T-cell (primary cell): ENCODE measurements at regions of chr2 and their contacts with region 1.

Region 1: DNA sequence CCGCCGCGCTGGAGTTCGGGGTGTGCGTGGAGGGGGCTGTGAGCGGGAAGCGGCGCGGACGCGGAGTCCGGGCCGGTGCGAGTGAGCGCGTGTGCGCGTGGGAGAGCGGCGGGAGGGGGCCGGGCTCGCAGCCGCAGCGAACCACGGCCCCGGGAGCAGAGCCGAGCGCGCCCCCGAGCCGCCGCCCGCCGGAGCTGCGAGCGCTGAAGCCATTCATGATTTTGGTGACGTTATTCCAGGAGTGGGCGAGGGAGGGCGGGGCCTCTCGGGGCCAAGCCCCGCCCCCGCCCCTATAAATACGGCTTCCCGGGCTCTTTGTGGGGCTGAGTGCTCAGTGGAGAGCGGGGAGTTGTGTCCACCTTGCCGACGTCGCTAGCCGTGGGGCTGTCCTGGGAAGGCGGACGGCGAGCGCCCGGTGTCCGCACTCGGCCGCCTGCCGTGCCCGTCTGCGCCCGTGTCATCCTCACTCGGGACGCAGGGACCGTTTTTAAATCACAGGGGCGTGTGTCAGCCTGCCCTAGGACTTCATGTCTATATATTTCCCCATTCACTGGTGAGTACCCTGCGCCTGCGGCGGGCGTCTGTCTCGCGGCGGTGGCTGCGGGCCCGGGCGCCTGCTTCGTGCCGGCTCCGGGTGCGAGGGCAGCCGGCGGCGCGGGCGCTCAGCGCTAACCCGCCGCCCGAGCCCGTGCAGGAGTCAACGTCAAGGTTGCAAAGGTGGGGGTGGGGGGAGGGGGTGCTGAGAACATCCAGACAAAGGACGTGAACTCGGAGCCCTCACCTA is at the start of gene LBH:
- DNase-seq: peak; percentile 80 to 95 (median 88)
- ATAC-seq: peak; percentile 58 to 69 (median 63)
- H3K4me3 ChIP-seq: peak within 1 kb of the TSS; percentile 89 to 92
- H3K4me3 Mint-ChIP-seq: peak within 1 kb of the TSS; percentile 89 to 98 (median 92)
- H3K27ac ChIP-seq: peak within 1 kb of the TSS; percentile 90
- H3K27ac Mint-ChIP-seq: peak within 1 kb of the TSS; percentile 88 to 96
- H3K4me1 ChIP-seq: peaks cover 23 to 59% of the 10 kb centered on the region in 2 experiments
- H3K4me1 Mint-ChIP-seq: peaks cover 48 to 64% (median 63%) of the 10 kb centered on the region in 3 donors
- H3K27me3 ChIP-seq: no peaks in the 10 kb centered on the region
- H3K27me3 Mint-ChIP-seq: no peaks in the 10 kb centered on the region
- total RNA-seq, gene LBH: 209 to 386 (median 323) TPM

Region 2: DNA sequence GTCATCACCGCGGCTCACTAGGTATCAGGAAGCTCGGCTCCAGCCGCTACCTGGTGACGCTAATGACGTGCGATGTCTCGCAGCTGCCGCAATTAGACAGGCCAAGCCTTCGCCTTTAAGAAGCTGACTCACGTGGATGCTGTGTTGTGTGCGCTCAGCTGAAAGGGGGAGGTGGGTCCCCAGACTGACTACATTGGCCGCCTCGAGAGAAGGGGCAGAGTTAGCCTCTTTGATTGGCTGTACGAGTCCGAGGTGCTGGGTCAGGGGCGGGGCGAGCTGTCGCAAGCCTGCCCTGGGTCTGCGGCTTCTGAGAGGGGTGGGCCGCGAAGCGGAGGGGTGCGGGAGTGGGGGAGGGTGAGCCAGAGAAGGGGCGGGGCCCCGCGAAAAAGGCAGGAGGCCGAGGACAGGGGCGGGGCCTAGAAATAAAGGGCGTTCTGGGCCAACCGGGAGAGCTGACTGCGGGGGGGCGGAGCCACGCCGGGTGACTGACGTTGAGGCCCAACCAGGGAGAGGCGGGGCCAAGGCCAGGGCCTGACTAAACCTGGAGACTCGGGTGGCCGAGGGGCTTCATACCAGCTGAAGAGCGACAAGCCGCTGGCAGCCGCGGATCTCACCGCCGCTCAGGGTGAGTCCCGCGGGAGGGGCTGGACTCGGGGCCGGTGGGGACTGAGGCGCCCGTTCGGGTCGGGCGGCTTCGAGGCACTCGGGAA is 84.8 kb before region 1 on chr2 and contains the start of gene YPEL5:
- CTCF ChIA-PET with region 1: interaction called in 1 of 2 experiments, 3 read pairs
- POLR2A ChIA-PET with region 1: interaction called, 10 to 59 read pairs
- DNase-seq: peak; percentile 97 to 100 (median 100)
- ATAC-seq: peak; percentile 85 to 90 (median 88)
- H3K4me3 ChIP-seq: peak within 1 kb of the TSS; percentile 67 to 77
- H3K4me3 Mint-ChIP-seq: peak within 1 kb of the TSS; percentile 83 to 94 (median 84)
- H3K27ac ChIP-seq: peak within 1 kb of the TSS; percentile 99
- H3K27ac Mint-ChIP-seq: peak within 1 kb of the TSS; percentile 99 to 100
- H3K4me1 ChIP-seq: peaks cover 22 to 36% of the 10 kb centered on the region in 2 experiments
- H3K4me1 Mint-ChIP-seq: peaks cover 56 to 61% (median 58%) of the 10 kb centered on the region in 3 donors
- H3K27me3 ChIP-seq: no peaks in the 10 kb centered on the region
- H3K27me3 Mint-ChIP-seq: no peaks in the 10 kb centered on the region
- total RNA-seq, gene YPEL5: 73.0 to 962 (median 77.3) TPM

Region 3: GRCh38 chr2:30188292-30188691 is 43.1 kb before region 1 on chr2:
- CTCF ChIA-PET with region 1: no interaction called
- POLR2A ChIA-PET with region 1: no interaction called
- DNase-seq: no peak
- ATAC-seq: no peak
- H3K4me3 ChIP-seq: no peak overlapping the region
- H3K4me3 Mint-ChIP-seq: no peak overlapping the region
- H3K27ac ChIP-seq: no peak overlapping the region
- H3K27ac Mint-ChIP-seq: no peak overlapping the region
- H3K4me1 ChIP-seq: no peaks in the 10 kb centered on the region
- H3K4me1 Mint-ChIP-seq: peaks cover 0 to 4% (median 2%) of the 10 kb centered on the region in 3 donors
- H3K27me3 ChIP-seq: peaks cover 0 to 1% of the 10 kb centered on the region in 2 experiments
- H3K27me3 Mint-ChIP-seq: peaks cover 0 to 2% of the 10 kb centered on the region in 2 donors

Region 4: DNA sequence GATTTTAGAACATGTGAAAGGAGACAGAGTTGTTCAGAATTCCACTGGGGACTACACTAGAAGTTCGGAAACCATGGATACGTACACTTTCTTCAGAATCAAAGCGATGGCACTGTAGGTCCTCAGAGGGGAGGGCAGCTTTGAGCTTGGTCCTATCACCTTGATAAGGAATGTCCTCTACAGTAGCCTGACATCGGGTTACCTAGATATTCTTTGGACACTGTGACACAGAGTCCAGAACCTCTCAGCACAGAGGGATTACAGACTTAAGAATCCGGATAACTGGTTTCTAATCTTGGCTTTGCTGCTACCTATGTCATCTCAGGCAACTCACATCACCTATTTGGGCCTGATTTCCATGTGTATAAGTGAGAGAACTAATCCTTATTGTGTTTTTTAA is 14.0 kb after region 1 on chr2:
- CTCF ChIA-PET with region 1: interaction called, 4 to 6 read pairs
- POLR2A ChIA-PET with region 1: interaction called, 10 to 16 read pairs
- DNase-seq: no peak
- ATAC-seq: no peak
- H3K4me3 ChIP-seq: no peak overlapping the region
- H3K4me3 Mint-ChIP-seq: peak overlapping the region in 2 of 3 donors; percentile 34 to 67
- H3K27ac ChIP-seq: no peak overlapping the region
- H3K27ac Mint-ChIP-seq: peak overlapping the region; percentile 82 to 87
- H3K4me1 ChIP-seq: peaks cover 47 to 80% of the 10 kb centered on the region in 2 experiments
- H3K4me1 Mint-ChIP-seq: peaks cover 88 to 91% (median 89%) of the 10 kb centered on the region in 3 donors
- H3K27me3 ChIP-seq: no peaks in the 10 kb centered on the region
- H3K27me3 Mint-ChIP-seq: no peaks in the 10 kb centered on the region

Region 5: DNA sequence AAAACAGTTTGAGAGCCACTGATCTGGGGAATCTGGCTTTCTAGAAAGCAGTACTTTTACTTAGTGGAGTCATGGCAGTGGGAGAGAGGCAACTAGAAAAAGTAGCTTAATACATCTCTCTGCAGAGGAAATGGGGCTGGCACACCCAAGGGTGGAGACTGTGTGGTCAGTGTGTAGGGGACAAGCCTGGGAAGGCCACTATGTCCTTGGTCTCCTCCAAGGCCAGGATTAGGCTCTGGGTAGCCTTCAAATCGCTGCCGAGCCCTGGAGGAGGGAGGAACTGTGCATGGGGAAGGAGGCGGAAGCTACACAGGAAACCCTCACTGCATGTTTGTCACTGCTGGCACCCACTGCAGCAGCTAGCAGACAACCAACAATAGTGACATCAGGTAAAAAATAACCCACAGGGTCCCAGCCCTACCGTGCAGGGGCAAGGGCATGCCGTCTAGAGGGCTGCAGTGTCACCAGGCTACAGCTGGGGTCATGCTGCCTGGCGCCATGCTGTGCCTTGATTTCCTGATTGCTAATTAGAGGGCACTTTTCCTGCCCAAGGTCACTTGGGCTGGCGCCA is 34.7 kb after region 1 on chr2:
- CTCF ChIA-PET with region 1: interaction called, 3 to 4 read pairs
- POLR2A ChIA-PET with region 1: interaction called, 5 to 11 read pairs
- DNase-seq: peak; percentile 59 to 83 (median 71)
- ATAC-seq: peak; percentile 94 to 96 (median 96)
- H3K4me3 ChIP-seq: peak overlapping the region; percentile 34 to 50
- H3K4me3 Mint-ChIP-seq: peak overlapping the region; percentile 73 to 80 (median 79)
- H3K27ac ChIP-seq: peak overlapping the region; percentile 89
- H3K27ac Mint-ChIP-seq: peak overlapping the region; percentile 99
- H3K4me1 ChIP-seq: peaks cover 45 to 58% of the 10 kb centered on the region in 2 experiments
- H3K4me1 Mint-ChIP-seq: peaks cover 80 to 91% (median 84%) of the 10 kb centered on the region in 3 donors
- H3K27me3 ChIP-seq: no peaks in the 10 kb centered on the region
- H3K27me3 Mint-ChIP-seq: no peaks in the 10 kb centered on the region

Region 6: GRCh38 chr2:30341507-30342267 is 110.3 kb after region 1 on chr2:
- CTCF ChIA-PET with region 1: no interaction called
- POLR2A ChIA-PET with region 1: no interaction called
- DNase-seq: no peak
- ATAC-seq: no peak
- H3K4me3 ChIP-seq: no peak overlapping the region
- H3K4me3 Mint-ChIP-seq: no peak overlapping the region
- H3K27ac ChIP-seq: no peak overlapping the region
- H3K27ac Mint-ChIP-seq: peak overlapping the region in 1 of 2 donors; percentile 44
- H3K4me1 ChIP-seq: peaks cover 17 to 27% of the 10 kb centered on the region in 2 experiments
- H3K4me1 Mint-ChIP-seq: peaks cover 38 to 42% (median 41%) of the 10 kb centered on the region in 3 donors
- H3K27me3 ChIP-seq: no peaks in the 10 kb centered on the region
- H3K27me3 Mint-ChIP-seq: no peaks in the 10 kb centered on the region

Region 7: DNA sequence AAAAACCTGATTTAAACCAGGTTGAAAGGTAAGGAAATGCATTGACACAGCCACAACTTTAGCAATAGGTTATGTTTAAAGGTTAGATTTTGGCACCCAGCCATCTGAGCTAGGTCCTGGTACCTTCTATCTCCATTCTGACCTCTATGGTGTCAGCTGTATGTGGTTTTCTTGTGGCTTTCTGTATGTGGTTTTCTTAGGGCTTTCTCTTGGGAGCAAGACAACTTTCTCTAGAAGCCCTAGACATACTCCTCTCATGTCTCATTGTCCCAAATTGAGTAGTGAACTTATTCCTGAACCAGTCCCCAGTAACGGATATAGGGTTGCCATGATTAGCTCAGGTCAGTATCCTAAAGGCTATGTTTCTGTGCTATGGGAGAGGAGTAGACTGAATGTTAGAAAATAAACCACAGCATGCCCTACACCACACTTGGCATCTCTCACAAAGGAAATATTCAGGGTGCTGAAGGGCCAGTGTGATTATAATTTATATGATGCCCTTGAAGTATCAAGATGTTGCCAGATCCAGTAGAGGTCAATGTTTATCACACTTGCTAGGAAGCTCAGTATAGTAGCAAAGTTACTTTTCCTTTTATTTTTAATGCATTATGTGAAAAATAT is 399.8 kb after region 1 on chr2:
- CTCF ChIA-PET with region 1: no interaction called
- POLR2A ChIA-PET with region 1: interaction called in 1 of 2 experiments, 10 read pairs
- DNase-seq: peak in 1 of 35 experiments; percentile 42
- ATAC-seq: peak in 3 of 4 experiments; percentile 40 to 54 (median 46)
- H3K4me3 ChIP-seq: no peak overlapping the region
- H3K4me3 Mint-ChIP-seq: no peak overlapping the region
- H3K27ac ChIP-seq: no peak overlapping the region
- H3K27ac Mint-ChIP-seq: no peak overlapping the region
- H3K4me1 ChIP-seq: peaks cover 0 to 2% of the 10 kb centered on the region in 2 experiments
- H3K4me1 Mint-ChIP-seq: peaks cover 24 to 48% (median 29%) of the 10 kb centered on the region in 3 donors
- H3K27me3 ChIP-seq: no peaks in the 10 kb centered on the region
- H3K27me3 Mint-ChIP-seq: no peaks in the 10 kb centered on the region